Endothelial cell of umbilical vein (primary cell): ENCODE measurements at regions of chr1 and their contacts with region 1.

Region 1: GRCh38 chr1:87953732-87954344 is 625.2 kb downstream of the LMO4 start:
- DNase-seq: peak; percentile 71
- H3K4me3 ChIP-seq: no peak overlapping the region
- H3K27ac ChIP-seq: no peak overlapping the region
- H3K4me1 ChIP-seq: peaks cover 3% of the 10 kb centered on the region
- H3K27me3 ChIP-seq: no peaks in the 10 kb centered on the region
- CTCF ChIP-seq: peak; percentile 81 to 87
- POLR2A ChIP-seq: no peak

Region 2: GRCh38 chr1:85957760-85958159 is 1996.1 kb before region 1 on chr1:
- CTCF ChIA-PET with region 1: no interaction called
- POLR2A ChIA-PET with region 1: no interaction called
- dilution Hi-C with region 1: no loop called
- intact Hi-C with region 1: no loop called
- DNase-seq: no peak
- H3K4me3 ChIP-seq: no peak overlapping the region
- H3K27ac ChIP-seq: no peak overlapping the region
- H3K4me1 ChIP-seq: no peaks in the 10 kb centered on the region
- H3K27me3 ChIP-seq: peaks cover 0 to 2% of the 10 kb centered on the region in 2 experiments
- CTCF ChIP-seq: no peak
- POLR2A ChIP-seq: no peak

Region 3: DNA sequence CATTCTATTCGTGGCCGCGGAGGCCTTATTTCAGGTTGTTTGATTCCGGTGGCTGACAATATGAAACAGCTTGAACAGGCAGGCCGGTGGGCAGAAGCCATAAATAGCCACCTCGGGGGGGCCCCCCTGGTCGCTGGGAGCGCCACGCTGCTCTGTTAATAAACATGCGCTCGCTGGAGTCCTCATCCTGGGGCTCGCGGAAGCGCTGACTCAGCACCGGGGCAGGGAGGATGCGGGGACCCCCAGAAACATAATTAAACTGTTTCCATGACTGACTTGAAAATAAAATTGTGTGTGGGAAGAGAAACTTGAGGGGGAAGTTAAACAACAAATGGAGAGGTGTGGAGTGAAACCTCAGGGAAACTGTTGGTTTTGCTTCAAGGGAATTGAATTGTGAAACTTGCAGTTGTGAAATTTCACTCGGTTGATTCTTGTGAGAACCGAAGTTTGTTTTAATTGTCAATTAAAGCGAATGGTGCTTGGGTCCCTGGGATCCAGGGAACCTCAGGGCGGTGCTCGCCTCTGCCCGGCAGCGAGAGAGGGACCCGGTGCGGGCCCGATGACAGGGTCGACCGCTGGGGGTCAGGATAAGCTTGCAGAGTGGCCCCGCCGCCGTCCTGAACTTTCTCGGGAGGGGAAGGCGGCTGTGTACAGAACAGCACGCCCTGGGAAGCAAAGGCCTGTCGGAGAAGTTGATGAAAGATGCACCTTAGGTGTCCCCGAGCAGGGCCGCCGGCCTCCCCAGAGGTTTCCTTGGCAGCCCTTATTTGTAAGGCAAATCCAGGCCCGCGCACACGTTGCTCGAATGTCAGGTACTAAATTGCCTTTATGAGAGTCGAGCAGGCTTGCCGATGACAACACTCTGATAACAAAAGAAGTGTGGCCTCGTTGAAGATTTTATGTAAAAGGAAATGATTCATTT is 802.1 kb before region 1 on chr1:
- CTCF ChIA-PET with region 1: interaction called, 5 read pairs
- POLR2A ChIA-PET with region 1: no interaction called
- dilution Hi-C with region 1: no loop called
- intact Hi-C with region 1: loop called (anchors 1 kb)
- DNase-seq: peak; percentile 64
- H3K4me3 ChIP-seq: peak overlapping the region in 2 of 3 experiments; percentile 0 to 46
- H3K27ac ChIP-seq: no peak overlapping the region
- H3K4me1 ChIP-seq: peaks cover 19% of the 10 kb centered on the region
- H3K27me3 ChIP-seq: peaks cover 9 to 15% of the 10 kb centered on the region in 2 experiments
- CTCF ChIP-seq: peak; percentile 52 to 62
- POLR2A ChIP-seq: no peak

Region 4: DNA sequence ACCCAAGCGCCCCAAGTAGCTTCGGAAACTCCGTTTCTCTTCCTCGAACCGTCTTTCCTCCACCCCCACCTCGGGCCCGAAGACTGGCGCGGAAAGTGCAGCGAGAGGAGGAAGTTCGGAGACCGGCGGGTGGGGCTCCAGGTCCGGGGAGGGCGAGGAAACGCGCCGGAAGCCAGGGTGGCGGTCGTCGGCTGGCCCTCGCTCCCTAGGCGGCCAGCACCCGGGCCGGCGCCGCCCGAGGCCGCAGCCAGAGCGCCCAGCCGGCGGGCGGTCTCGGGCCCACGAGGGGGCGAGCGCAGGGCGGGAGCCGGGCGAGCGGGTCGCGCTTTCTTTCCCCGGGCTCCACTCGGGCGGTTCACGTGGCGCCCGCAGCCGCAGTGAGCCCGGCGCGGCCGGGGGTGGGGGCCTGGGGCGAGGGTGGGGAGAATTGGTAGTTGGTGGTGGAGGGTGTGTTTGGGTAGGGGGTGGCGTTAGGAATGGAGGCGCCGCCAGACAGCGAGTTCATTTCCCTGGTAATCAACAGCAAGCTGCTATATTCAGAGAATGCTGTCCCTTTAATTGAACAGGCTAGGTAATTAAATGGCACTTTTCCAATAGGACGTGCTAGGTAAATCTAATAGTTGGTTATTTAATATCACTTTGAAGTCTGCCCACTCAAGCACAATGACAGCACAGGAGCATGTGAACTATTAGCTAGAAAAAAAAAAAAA is 618.5 kb before region 1 on chr1:
- CTCF ChIA-PET with region 1: interaction called, 27 read pairs
- POLR2A ChIA-PET with region 1: no interaction called
- dilution Hi-C with region 1: no loop called
- intact Hi-C with region 1: no loop called
- DNase-seq: peak; percentile 42
- H3K4me3 ChIP-seq: peak overlapping the region; percentile 61 to 88 (median 63)
- H3K27ac ChIP-seq: peak overlapping the region; percentile 66
- H3K4me1 ChIP-seq: peaks cover 20% of the 10 kb centered on the region
- H3K27me3 ChIP-seq: no peaks in the 10 kb centered on the region
- CTCF ChIP-seq: peak in 1 of 2 donors; percentile 40
- POLR2A ChIP-seq: peak; percentile 54

Region 5: GRCh38 chr1:87435484-87435883 is 518.4 kb before region 1 on chr1:
- CTCF ChIA-PET with region 1: no interaction called
- POLR2A ChIA-PET with region 1: no interaction called
- dilution Hi-C with region 1: no loop called
- intact Hi-C with region 1: no loop called
- DNase-seq: no peak
- H3K4me3 ChIP-seq: no peak overlapping the region
- H3K27ac ChIP-seq: no peak overlapping the region
- H3K4me1 ChIP-seq: no peaks in the 10 kb centered on the region
- H3K27me3 ChIP-seq: no peaks in the 10 kb centered on the region
- CTCF ChIP-seq: no peak
- POLR2A ChIP-seq: no peak

Region 6: GRCh38 chr1:87684194-87684593 is 269.6 kb before region 1 on chr1:
- CTCF ChIA-PET with region 1: interaction called, 3 read pairs
- POLR2A ChIA-PET with region 1: no interaction called
- dilution Hi-C with region 1: no loop called
- intact Hi-C with region 1: loop called (anchors 5 kb)
- DNase-seq: peak; percentile 55
- H3K4me3 ChIP-seq: peak overlapping the region; percentile 36 to 74 (median 42)
- H3K27ac ChIP-seq: peak overlapping the region; percentile 6
- H3K4me1 ChIP-seq: peaks cover 23% of the 10 kb centered on the region
- H3K27me3 ChIP-seq: no peaks in the 10 kb centered on the region
- CTCF ChIP-seq: no peak
- POLR2A ChIP-seq: no peak

Region 7: GRCh38 chr1:88061492-88062177 is 107.8 kb after region 1 on chr1:
- CTCF ChIA-PET with region 1: interaction called, 14 read pairs
- POLR2A ChIA-PET with region 1: no interaction called
- dilution Hi-C with region 1: no loop called
- intact Hi-C with region 1: no loop called
- DNase-seq: peak; percentile 59
- H3K4me3 ChIP-seq: no peak overlapping the region
- H3K27ac ChIP-seq: no peak overlapping the region
- H3K4me1 ChIP-seq: peaks cover 6% of the 10 kb centered on the region
- H3K27me3 ChIP-seq: no peaks in the 10 kb centered on the region
- CTCF ChIP-seq: peak; percentile 65 to 67
- POLR2A ChIP-seq: no peak